ENCODE measurements at regions of chr14 and their contacts with region 1.

Region 1: DNA sequence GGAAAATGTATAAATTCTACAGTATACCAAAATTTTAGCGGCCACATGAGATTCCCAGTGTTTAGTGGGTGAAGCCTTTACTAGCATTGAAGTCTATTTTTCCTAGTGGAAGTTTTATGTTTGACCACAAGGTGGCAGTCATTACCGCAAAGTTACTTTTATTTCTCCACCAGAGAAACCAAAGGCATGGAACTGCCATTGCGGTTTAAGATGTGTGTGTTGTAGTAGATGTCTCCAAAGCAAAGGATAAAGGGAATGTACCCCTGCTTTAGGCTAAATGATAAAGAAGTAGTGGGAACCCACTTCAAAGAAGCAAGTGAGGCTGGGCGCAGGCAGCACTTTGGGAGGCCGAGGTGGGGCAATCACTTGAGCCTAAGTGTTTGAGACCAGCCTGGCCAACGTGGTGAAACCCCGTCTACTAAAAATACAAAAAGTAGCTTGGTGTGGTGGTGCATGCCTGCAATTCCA is 140.5 kb downstream of the PRKCH start:
- DNase-seq: peak in 1 of 3 donors; percentile 71
- ATAC-seq: peak; percentile 78
- H3K4me3 ChIP-seq: no peak overlapping the region
- H3K4me1 ChIP-seq: peaks cover 13% of the 10 kb centered on the region
- CTCF ChIP-seq: peak; percentile 43

Region 2: DNA sequence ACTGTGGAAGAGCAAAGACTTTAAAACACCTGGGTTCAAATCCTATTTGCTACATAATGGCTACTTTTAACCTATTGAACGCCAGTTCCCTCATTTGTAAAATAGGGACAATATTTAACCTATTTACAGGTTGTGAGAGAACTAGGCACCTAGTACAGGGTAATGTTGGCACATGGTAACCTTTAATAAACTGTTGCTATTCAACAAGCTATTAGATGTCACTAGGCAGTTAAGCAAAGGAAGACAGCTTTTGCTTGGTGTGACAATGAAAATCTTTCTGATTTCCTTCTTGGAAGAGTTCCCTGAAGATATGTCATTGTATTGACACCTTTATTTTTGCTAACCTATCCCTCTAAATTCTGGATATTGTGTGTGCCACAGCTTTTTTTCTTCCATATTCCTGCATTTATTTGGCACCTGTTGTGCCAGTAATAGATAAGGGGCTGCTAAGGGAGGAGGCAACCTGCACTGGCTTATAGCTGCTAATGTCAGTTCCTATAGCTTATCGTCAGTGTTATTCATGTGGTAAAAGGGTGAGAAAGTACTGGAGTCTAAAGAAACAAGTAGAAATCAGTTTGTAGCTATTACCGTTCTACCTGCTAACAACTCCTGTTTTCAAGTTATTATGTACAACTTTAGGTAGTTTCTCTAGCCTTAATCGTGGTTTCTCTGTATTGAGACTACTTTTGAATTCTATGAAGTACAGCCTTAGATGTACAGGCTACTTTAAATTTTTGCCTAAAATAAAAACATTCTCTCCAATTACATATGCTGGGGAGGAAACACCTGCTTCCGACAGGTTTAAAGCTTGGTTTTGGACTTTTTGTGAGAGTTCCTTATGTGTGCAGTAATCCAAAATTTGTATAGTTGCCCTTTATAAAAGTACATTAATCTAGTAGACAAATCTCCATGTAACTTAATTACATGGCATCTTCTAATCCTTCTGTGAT is 257.8 kb after region 1 on chr14:
- intact Hi-C with region 1: loop called in 1 of 2 experiments (anchors 10 kb)
- DNase-seq: no peak
- ATAC-seq: peak; percentile 43
- H3K4me3 ChIP-seq: no peak overlapping the region
- H3K4me1 ChIP-seq: peaks cover 24% of the 10 kb centered on the region
- CTCF ChIP-seq: no peak

Region 3: GRCh38 chr14:61761959-61762786 is 300.3 kb after region 1 on chr14 and contains the start of gene SNAPC1:
- intact Hi-C with region 1: loop called (anchors 10 kb)
- DNase-seq: peak; percentile 97 to 99 (median 98)
- ATAC-seq: peak; percentile 99
- H3K4me3 ChIP-seq: peak within 1 kb of the TSS; percentile 72
- H3K4me1 ChIP-seq: peaks cover 10% of the 10 kb centered on the region
- CTCF ChIP-seq: no peak
- total RNA-seq, gene SNAPC1: 2.0 to 4.8 (median 2.5) TPM

Region 4: GRCh38 chr14:61837336-61838229 is 375.7 kb after region 1 on chr14:
- intact Hi-C with region 1: loop called (anchors 5 kb)
- DNase-seq: peak; percentile 57 to 88 (median 77)
- ATAC-seq: peak; percentile 99
- H3K4me3 ChIP-seq: no peak overlapping the region
- H3K4me1 ChIP-seq: no peaks in the 10 kb centered on the region
- CTCF ChIP-seq: peak; percentile 82

Measured in mucosa of descending colon (tissue), 3 donors.